GM12878 (cell line): ENCODE measurements at regions of chr9 and their contacts with region 1.

Region 1: DNA sequence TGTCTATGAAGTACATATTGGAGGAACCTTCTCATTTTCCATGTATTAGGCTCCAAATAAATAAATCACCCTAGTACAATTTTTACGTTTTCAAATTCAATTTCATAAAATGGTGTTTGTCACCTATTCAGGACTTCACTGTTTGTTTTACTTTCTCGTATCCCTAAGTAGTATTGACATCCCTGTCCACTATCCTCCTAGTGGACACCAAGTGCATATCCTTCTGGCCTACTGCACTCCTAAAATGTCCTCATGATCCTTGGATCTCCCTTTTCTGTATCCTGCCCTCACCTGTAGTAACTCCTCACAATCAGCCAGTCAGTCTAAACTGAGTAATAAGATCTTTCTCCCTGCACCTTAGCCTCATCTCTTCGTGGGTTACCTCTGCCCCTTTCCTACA is 539.9 kb downstream of the DMRTA1 start:
- DNase-seq: no peak
- ATAC-seq: no peak
- H3K4me3 ChIP-seq: no peak overlapping the region
- H3K27ac ChIP-seq: no peak overlapping the region
- H3K4me1 ChIP-seq: no peaks in the 10 kb centered on the region
- H3K27me3 ChIP-seq: no peaks in the 10 kb centered on the region
- CTCF ChIP-seq: no peak
- EP300 ChIP-seq: no peak
- POLR2A ChIP-seq: no peak
- RAD21 ChIP-seq: no peak

Region 2: GRCh38 chr9:22976454-22976853 is 10.1 kb before region 1 on chr9:
- CTCF ChIA-PET with region 1: interaction called, 3 read pairs
- POLR2A ChIA-PET with region 1: no interaction called
- RAD21 ChIA-PET with region 1: no interaction called
- SMC1A ChIA-PET with region 1: interaction called, 10 read pairs
- in situ Hi-C with region 1: no loop called
- intact Hi-C with region 1: no loop called
- DNase-seq: no peak
- ATAC-seq: no peak
- H3K4me3 ChIP-seq: no peak overlapping the region
- H3K27ac ChIP-seq: no peak overlapping the region
- H3K4me1 ChIP-seq: no peaks in the 10 kb centered on the region
- H3K27me3 ChIP-seq: no peaks in the 10 kb centered on the region
- CTCF ChIP-seq: no peak
- EP300 ChIP-seq: no peak
- POLR2A ChIP-seq: no peak
- RAD21 ChIP-seq: no peak